ENCODE measurements at regions of chr6 and their contacts with region 1.

Region 1: DNA sequence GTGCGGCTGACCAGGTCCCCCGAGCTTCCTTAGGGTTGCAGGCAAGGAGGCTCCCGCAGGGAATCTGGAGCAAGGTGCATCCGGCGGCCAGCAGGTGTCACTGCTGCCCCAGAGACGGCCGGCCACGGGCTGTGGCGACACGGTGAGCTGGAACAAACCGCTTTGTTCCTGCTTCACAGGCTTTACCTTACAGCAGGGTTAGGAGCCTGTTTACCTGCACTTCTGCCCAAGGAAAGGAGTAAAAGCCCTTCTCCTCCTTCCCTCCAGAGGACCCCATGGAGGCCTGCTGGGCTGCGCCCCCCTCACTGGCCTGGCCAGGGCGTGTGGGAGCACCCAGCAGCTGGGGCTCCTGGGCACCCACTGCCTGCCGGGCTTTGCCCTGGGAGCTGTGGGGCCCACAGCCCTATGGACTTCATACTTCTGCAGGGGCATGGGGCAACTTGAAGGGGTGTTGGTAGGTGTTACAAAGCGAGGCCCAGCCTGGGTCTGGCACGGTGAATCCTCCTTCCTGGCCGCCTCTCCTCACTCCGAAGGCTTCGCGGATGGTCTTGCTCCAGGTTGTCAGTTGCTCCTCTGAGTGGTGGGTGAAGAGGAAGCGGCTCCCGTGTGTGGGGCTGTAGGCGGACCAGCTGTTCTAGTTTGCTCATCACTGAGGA is 88.4 kb downstream of the CDC5L start:
- DNase-seq: peak; percentile 91 to 92 (median 92)
- ATAC-seq: peak; percentile 87
- H3K4me3 ChIP-seq: no peak overlapping the region
- H3K27ac ChIP-seq: peak overlapping the region; percentile 48
- H3K4me1 ChIP-seq: peaks cover 35 to 47% of the 10 kb centered on the region in 2 experiments
- H3K27me3 ChIP-seq: peaks cover 21 to 36% of the 10 kb centered on the region in 2 experiments; a peak in 4 of 5 replicates
- CTCF ChIP-seq: peak; percentile 95 to 99 (median 98)
- EP300 ChIP-seq: peak; percentile 66
- POLR2A ChIP-seq: no peak
- RAD21 ChIP-seq: peak; percentile 97 to 99

Region 2: GRCh38 chr6:42947950-42948349 is 1528.0 kb before region 1 on chr6:
- CTCF ChIA-PET with region 1: no interaction called
- POLR2A ChIA-PET with region 1: no interaction called
- in situ Hi-C with region 1: no loop called
- intact Hi-C with region 1: no loop called
- DNase-seq: no peak
- ATAC-seq: no peak
- H3K4me3 ChIP-seq: no peak overlapping the region
- H3K27ac ChIP-seq: no peak overlapping the region
- H3K4me1 ChIP-seq: peaks cover 0 to 4% of the 10 kb centered on the region in 2 experiments; a peak in 1 of 5 replicates
- H3K27me3 ChIP-seq: no peaks in the 10 kb centered on the region
- CTCF ChIP-seq: no peak
- EP300 ChIP-seq: no peak
- POLR2A ChIP-seq: no peak
- RAD21 ChIP-seq: no peak

Region 3: DNA sequence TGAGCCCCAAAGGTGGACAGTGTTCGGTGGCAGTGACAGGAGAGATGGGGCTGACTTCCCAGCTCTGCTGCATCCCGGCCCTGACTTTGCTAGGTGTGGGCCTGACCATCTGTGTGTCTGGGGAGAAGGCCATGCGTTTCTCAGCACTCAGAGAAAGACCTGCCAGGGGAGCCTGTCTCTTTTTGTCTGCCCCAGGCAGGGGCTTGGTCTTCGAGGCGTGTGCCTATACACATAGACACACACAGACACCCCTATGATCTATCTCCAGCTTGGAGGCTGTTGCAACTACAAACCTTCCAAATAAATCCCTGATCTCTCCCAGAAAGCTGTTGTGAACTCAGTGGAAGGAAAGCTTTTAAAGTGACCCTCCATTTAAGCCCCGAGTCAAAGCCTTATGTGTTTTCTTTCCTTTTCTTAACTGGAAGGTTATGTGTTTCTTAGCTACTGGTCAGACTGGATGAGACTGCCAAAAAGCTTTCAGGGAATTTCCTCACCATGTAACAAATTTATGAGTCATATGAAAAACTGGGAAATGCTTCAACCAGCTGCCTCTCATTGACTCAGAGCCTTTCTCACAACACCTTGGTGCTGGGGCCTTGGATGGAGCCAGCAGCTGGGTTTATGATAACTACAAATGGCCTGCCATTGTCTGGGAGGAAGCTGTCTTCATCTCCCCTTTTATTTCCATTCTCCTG is 14.2 kb after region 1 on chr6:
- CTCF ChIA-PET with region 1: interaction called, 9 read pairs
- POLR2A ChIA-PET with region 1: interaction called, 10 read pairs
- in situ Hi-C with region 1: no loop called
- intact Hi-C with region 1: loop called (anchors 1 kb)
- DNase-seq: no peak
- ATAC-seq: peak; percentile 12; the same call in 1 of the 3 replicates
- H3K4me3 ChIP-seq: no peak overlapping the region
- H3K27ac ChIP-seq: no peak overlapping the region
- H3K4me1 ChIP-seq: no peaks in the 10 kb centered on the region; a peak in 1 of 5 replicates
- H3K27me3 ChIP-seq: peaks cover 19 to 26% of the 10 kb centered on the region in 2 experiments
- CTCF ChIP-seq: no peak
- EP300 ChIP-seq: no peak
- POLR2A ChIP-seq: no peak
- RAD21 ChIP-seq: no peak

Region 4: GRCh38 chr6:44630125-44631028 is 154.5 kb after region 1 on chr6:
- CTCF ChIA-PET with region 1: interaction called, 4 read pairs
- POLR2A ChIA-PET with region 1: interaction called, 3 read pairs
- in situ Hi-C with region 1: no loop called
- intact Hi-C with region 1: loop called (anchors 5 kb)
- DNase-seq: peak; percentile 68 to 81 (median 74)
- ATAC-seq: peak; percentile 96
- H3K4me3 ChIP-seq: no peak overlapping the region
- H3K27ac ChIP-seq: no peak overlapping the region
- H3K4me1 ChIP-seq: no peaks in the 10 kb centered on the region
- H3K27me3 ChIP-seq: peaks cover 7 to 54% of the 10 kb centered on the region in 2 experiments
- CTCF ChIP-seq: peak; percentile 71 to 74 (median 74)
- EP300 ChIP-seq: no peak
- POLR2A ChIP-seq: no peak
- RAD21 ChIP-seq: peak; percentile 78 to 80

Region 5: GRCh38 chr6:44833248-44833647 is 357.3 kb after region 1 on chr6:
- CTCF ChIA-PET with region 1: no interaction called
- POLR2A ChIA-PET with region 1: no interaction called
- in situ Hi-C with region 1: no loop called
- intact Hi-C with region 1: no loop called
- DNase-seq: no peak
- ATAC-seq: no peak
- H3K4me3 ChIP-seq: no peak overlapping the region
- H3K27ac ChIP-seq: no peak overlapping the region
- H3K4me1 ChIP-seq: no peaks in the 10 kb centered on the region
- H3K27me3 ChIP-seq: no peaks in the 10 kb centered on the region
- CTCF ChIP-seq: no peak
- EP300 ChIP-seq: no peak
- POLR2A ChIP-seq: no peak
- RAD21 ChIP-seq: no peak

Region 6: GRCh38 chr6:45377554-45378333 is 901.8 kb after region 1 on chr6 and contains the start of gene SUPT3H:
- CTCF ChIA-PET with region 1: no interaction called
- POLR2A ChIA-PET with region 1: no interaction called
- in situ Hi-C with region 1: no loop called
- intact Hi-C with region 1: loop called (anchors 5 kb)
- DNase-seq: peak; percentile 96 to 99 (median 97)
- ATAC-seq: peak; percentile 93
- H3K4me3 ChIP-seq: peak within 1 kb of the TSS; percentile 67
- H3K27ac ChIP-seq: peak within 1 kb of the TSS; percentile 93
- H3K4me1 ChIP-seq: peaks cover 2 to 9% of the 10 kb centered on the region in 2 experiments; a peak in 1 of 5 replicates
- H3K27me3 ChIP-seq: no peaks in the 10 kb centered on the region
- CTCF ChIP-seq: peak; percentile 41 to 46 (median 42); a peak in 5 of 6 replicates
- EP300 ChIP-seq: no peak
- POLR2A ChIP-seq: peak; percentile 97
- RAD21 ChIP-seq: peak; percentile 50 to 56
- polyA plus RNA-seq, gene SUPT3H: 13.2 to 16.3 TPM

Region 7: DNA sequence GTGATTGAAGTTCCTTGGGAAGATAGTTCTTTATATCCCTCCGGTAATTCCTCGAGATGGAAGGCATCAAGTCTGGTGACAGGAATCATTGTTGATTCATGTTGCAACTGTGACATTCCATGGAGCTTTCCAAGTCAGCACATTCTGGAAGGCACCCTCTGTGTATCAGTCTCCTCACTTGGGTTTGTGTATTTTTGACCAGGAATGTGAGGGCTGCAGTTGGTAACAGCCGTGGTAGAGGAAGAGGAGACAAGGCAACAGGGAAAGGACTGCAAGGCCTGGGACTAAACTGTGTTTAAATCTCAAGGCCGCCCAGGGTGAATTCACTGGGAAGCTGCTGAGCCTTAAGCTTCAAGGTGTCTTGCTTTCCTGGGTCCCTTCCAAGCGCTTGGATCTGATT is 1440.8 kb after region 1 on chr6:
- CTCF ChIA-PET with region 1: no interaction called
- POLR2A ChIA-PET with region 1: no interaction called
- in situ Hi-C with region 1: loop called (anchors 10 kb)
- intact Hi-C with region 1: loop called (anchors 5 kb)
- DNase-seq: no peak
- ATAC-seq: no peak
- H3K4me3 ChIP-seq: no peak overlapping the region
- H3K27ac ChIP-seq: no peak overlapping the region
- H3K4me1 ChIP-seq: no peaks in the 10 kb centered on the region
- H3K27me3 ChIP-seq: 0 out of 5 replicates have a peak, but pooled peaks cover 0 to 4% of the 10 kb centered on the region in 2 experiments
- CTCF ChIP-seq: no peak
- EP300 ChIP-seq: no peak
- POLR2A ChIP-seq: no peak
- RAD21 ChIP-seq: no peak